ENCODE measurements at regions of chr13 and their contacts with region 1.

Region 1: DNA sequence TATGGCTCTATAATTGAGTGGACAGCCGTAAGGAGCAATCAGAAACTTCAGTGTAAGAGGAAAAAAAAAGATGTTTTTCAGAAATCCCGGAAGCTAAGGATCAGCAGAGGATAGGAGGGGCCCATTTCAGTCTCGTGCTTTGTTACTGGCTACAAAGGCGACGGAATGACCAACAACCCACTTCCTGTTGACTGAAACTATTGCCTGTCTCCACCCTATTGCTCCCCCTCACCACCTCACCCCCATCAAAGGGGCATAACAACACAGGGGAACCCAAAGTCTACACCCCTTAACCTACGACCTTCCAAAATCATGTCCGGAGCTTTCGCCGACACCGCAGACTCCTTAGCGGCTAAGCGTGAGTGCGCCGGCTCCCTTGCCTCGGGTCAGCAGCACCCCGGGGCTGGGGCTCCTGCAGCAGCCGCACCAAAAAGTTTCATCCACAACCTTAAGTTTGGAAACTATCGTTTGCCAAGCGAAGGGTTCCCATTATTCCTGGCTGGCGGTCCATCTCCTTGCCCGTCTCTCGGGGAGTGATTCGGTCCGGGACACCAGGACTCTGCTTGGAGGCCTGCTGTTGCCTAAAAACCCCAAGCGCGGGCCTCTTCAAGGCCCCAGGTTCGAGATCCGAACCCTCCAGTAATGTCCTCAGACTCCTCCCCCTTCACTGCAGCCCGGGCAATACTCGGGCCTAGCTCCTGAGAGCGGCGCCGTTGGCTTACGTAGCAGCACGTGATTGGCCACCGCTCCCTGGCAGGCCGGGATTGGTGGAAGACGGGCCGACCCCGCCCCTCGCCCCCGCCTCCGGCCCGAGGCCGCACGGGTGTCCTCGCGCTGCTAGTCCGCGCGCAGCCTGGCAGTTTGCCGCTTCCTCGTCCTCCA is at the start of gene TPP2:
- DNase-seq: peak; percentile 96 to 100 (median 98)
- ATAC-seq: peak; percentile 83
- H3K4me3 ChIP-seq: peak within 1 kb of the TSS; percentile 72 to 98
- H3K4me3 Mint-ChIP-seq: peak within 1 kb of the TSS; percentile 98
- H3K27ac ChIP-seq: peak within 1 kb of the TSS; percentile 98 to 100
- H3K27ac Mint-ChIP-seq: peak within 1 kb of the TSS; percentile 100
- H3K4me1 ChIP-seq: peaks cover 44% of the 10 kb centered on the region
- H3K4me1 Mint-ChIP-seq: peaks cover 68% of the 10 kb centered on the region
- H3K27me3 ChIP-seq: no peaks in the 10 kb centered on the region
- H3K27me3 Mint-ChIP-seq: no peaks in the 10 kb centered on the region
- CTCF ChIP-seq: no peak
- total RNA-seq, gene TPP2: 168 to 185 TPM

Region 2: DNA sequence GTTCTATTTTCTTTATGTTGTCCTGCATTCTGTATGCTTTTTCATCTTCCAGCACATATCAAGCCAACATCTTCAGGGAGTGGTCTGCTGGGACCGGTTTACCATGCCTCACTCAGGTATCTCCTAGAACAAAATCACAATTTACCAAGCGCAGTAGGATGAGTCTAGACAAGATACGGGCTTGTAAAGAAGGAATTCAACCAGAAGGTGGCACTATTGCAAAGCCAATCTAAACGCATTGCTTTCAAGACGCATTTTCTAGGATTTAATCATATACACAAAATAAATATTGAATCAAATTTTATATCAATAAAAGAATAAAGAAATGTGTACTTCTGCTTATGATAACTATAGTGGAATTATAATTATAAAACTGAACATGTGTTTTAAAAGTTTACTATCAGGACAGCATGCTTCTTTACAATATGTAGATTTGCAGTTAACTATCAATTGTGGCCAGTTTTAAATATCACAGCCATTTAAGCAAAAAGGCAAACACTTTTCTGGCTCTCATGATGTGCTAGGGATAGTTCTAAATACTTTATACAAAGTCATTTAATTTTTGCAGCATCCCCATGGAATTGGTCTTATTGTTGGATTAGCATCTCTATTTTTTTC is 15.7 kb before region 1 on chr13:
- CTCF ChIA-PET with region 1: interaction called, 47 read pairs
- POLR2A ChIA-PET with region 1: interaction called, 7 read pairs
- intact Hi-C with region 1: no loop called
- DNase-seq: peak in 4 of 9 experiments; percentile 20 to 80 (median 60)
- ATAC-seq: peak; percentile 87
- H3K4me3 ChIP-seq: no peak overlapping the region
- H3K4me3 Mint-ChIP-seq: no peak overlapping the region
- H3K27ac ChIP-seq: no peak overlapping the region
- H3K27ac Mint-ChIP-seq: no peak overlapping the region
- H3K4me1 ChIP-seq: peaks cover 9% of the 10 kb centered on the region
- H3K4me1 Mint-ChIP-seq: peaks cover 16% of the 10 kb centered on the region
- H3K27me3 ChIP-seq: peaks cover 0 to 2% of the 10 kb centered on the region in 2 experiments
- H3K27me3 Mint-ChIP-seq: peaks cover 3% of the 10 kb centered on the region
- CTCF ChIP-seq: peak; percentile 88

Region 3: DNA sequence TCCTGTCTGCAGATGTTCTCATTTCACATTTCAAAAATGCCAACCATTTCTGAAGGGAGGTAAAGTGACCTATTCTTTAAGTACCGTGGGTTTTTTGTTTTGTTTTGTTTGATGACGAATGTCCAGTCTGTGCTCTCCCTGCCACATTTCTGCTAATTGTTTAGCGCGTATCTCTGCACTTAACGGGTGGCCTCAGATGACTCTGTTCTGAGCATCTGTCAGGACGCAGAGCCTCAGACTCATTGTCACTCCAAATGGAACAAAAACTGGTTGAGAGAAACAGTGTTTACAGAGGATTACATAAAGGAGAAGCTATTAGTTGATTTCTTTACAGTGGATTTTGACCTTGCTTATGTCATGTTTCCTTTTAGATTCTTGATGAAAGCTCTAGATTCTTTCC is 24.1 kb after region 1 on chr13:
- CTCF ChIA-PET with region 1: interaction called, 7 read pairs
- POLR2A ChIA-PET with region 1: interaction called, 4 read pairs
- intact Hi-C with region 1: loop called in 1 of 2 experiments (anchors 1 kb)
- DNase-seq: no peak
- ATAC-seq: no peak
- H3K4me3 ChIP-seq: no peak overlapping the region
- H3K4me3 Mint-ChIP-seq: no peak overlapping the region
- H3K27ac ChIP-seq: no peak overlapping the region
- H3K27ac Mint-ChIP-seq: peak overlapping the region; percentile 12
- H3K4me1 ChIP-seq: no peaks in the 10 kb centered on the region
- H3K4me1 Mint-ChIP-seq: peaks cover 18% of the 10 kb centered on the region
- H3K27me3 ChIP-seq: no peaks in the 10 kb centered on the region
- H3K27me3 Mint-ChIP-seq: no peaks in the 10 kb centered on the region
- CTCF ChIP-seq: no peak

Region 4: GRCh38 chr13:102642475-102642874 is 46.1 kb after region 1 on chr13:
- CTCF ChIA-PET with region 1: interaction called, 14 read pairs
- POLR2A ChIA-PET with region 1: interaction called, 5 read pairs
- intact Hi-C with region 1: no loop called
- DNase-seq: no peak
- ATAC-seq: no peak
- H3K4me3 ChIP-seq: no peak overlapping the region
- H3K4me3 Mint-ChIP-seq: no peak overlapping the region
- H3K27ac ChIP-seq: no peak overlapping the region
- H3K27ac Mint-ChIP-seq: peak overlapping the region; percentile 20
- H3K4me1 ChIP-seq: no peaks in the 10 kb centered on the region
- H3K4me1 Mint-ChIP-seq: peaks cover 5% of the 10 kb centered on the region
- H3K27me3 ChIP-seq: no peaks in the 10 kb centered on the region
- H3K27me3 Mint-ChIP-seq: no peaks in the 10 kb centered on the region
- CTCF ChIP-seq: no peak

Region 5: GRCh38 chr13:102657630-102658029 is 61.2 kb after region 1 on chr13:
- CTCF ChIA-PET with region 1: interaction called, 16 read pairs
- POLR2A ChIA-PET with region 1: interaction called, 3 read pairs
- intact Hi-C with region 1: loop called in 1 of 2 experiments (anchors 5 kb)
- DNase-seq: peak in 2 of 9 experiments; percentile 13 to 27
- ATAC-seq: peak; percentile 55
- H3K4me3 ChIP-seq: no peak overlapping the region
- H3K4me3 Mint-ChIP-seq: no peak overlapping the region
- H3K27ac ChIP-seq: no peak overlapping the region
- H3K27ac Mint-ChIP-seq: no peak overlapping the region
- H3K4me1 ChIP-seq: no peaks in the 10 kb centered on the region
- H3K4me1 Mint-ChIP-seq: no peaks in the 10 kb centered on the region
- H3K27me3 ChIP-seq: no peaks in the 10 kb centered on the region
- H3K27me3 Mint-ChIP-seq: no peaks in the 10 kb centered on the region
- CTCF ChIP-seq: peak; percentile 63

Region 6: DNA sequence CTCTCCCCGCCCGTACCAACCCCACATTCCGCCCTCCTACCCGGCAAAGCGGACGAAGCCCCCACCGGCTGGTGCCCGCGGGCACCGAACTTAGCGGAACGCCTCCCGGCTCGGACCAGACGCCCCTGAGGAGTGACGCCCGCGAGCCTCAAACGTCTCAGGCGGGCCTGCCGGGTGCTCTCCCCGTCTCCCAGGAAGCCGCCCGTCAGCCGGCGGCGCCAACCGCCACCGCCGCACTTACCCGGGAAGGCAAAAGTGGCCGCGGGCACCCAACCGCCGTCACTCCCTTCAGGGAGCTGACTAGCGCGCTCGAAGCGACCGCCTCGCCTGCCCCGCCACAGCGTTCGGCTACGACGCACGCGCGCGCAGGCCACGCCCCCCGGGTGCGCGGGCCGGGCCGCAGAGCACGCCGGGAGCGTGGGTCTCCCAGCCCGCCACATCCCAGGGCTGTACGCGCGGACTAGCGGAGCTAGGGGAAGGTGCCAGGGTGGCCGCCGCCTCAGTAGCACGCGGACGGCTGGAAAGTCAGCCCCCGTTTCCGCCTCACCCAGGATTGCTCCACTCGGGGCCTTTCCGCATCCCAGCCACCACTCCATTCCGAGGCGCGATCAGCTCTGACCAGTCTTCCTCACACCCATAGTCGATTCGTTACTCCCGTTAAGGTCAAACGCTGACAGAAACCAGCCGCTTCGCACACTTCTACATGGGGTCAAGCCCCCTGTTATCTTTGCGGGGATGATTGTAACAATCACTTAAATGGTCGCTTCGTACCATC is 177.2 kb after region 1 on chr13 and contains the start of gene TEX30:
- CTCF ChIA-PET with region 1: interaction called, 3 read pairs
- POLR2A ChIA-PET with region 1: interaction called, 23 read pairs
- intact Hi-C with region 1: loop called (anchors 1 kb)
- DNase-seq: peak; percentile 75 to 93 (median 86)
- ATAC-seq: peak; percentile 96
- H3K4me3 ChIP-seq: peak within 1 kb of the TSS; percentile 66 to 70
- H3K4me3 Mint-ChIP-seq: peak within 1 kb of the TSS; percentile 88
- H3K27ac ChIP-seq: peak within 1 kb of the TSS; percentile 70 to 82
- H3K27ac Mint-ChIP-seq: peak within 1 kb of the TSS; percentile 91
- H3K4me1 ChIP-seq: peaks cover 15% of the 10 kb centered on the region
- H3K4me1 Mint-ChIP-seq: peaks cover 34% of the 10 kb centered on the region
- H3K27me3 ChIP-seq: no peaks in the 10 kb centered on the region
- H3K27me3 Mint-ChIP-seq: no peaks in the 10 kb centered on the region
- CTCF ChIP-seq: no peak
- total RNA-seq, gene TEX30: 10.4 to 10.9 TPM

Region 7: GRCh38 chr13:102845630-102846260 is 249.4 kb after region 1 on chr13 and contains the start of gene ERCC5:
- CTCF ChIA-PET with region 1: interaction called, 15 read pairs
- POLR2A ChIA-PET with region 1: interaction called, 246 read pairs
- intact Hi-C with region 1: loop called (anchors 1 kb)
- DNase-seq: peak; percentile 94 to 99 (median 97)
- ATAC-seq: peak; percentile 69
- H3K4me3 ChIP-seq: peak within 1 kb of the TSS; percentile 94 to 96
- H3K4me3 Mint-ChIP-seq: peak within 1 kb of the TSS; percentile 89
- H3K27ac ChIP-seq: peak within 1 kb of the TSS; percentile 98 to 99
- H3K27ac Mint-ChIP-seq: peak within 1 kb of the TSS; percentile 97
- H3K4me1 ChIP-seq: peaks cover 41% of the 10 kb centered on the region
- H3K4me1 Mint-ChIP-seq: peaks cover 45% of the 10 kb centered on the region
- H3K27me3 ChIP-seq: no peaks in the 10 kb centered on the region
- H3K27me3 Mint-ChIP-seq: no peaks in the 10 kb centered on the region
- CTCF ChIP-seq: no peak
- total RNA-seq, gene ERCC5: 109 to 121 TPM

Measured in CD8-positive, alpha-beta T cell (primary cell).